Left lung (tissue), 14 donors: ENCODE measurements at regions of chr1 and their contacts with region 1.

Region 1: DNA sequence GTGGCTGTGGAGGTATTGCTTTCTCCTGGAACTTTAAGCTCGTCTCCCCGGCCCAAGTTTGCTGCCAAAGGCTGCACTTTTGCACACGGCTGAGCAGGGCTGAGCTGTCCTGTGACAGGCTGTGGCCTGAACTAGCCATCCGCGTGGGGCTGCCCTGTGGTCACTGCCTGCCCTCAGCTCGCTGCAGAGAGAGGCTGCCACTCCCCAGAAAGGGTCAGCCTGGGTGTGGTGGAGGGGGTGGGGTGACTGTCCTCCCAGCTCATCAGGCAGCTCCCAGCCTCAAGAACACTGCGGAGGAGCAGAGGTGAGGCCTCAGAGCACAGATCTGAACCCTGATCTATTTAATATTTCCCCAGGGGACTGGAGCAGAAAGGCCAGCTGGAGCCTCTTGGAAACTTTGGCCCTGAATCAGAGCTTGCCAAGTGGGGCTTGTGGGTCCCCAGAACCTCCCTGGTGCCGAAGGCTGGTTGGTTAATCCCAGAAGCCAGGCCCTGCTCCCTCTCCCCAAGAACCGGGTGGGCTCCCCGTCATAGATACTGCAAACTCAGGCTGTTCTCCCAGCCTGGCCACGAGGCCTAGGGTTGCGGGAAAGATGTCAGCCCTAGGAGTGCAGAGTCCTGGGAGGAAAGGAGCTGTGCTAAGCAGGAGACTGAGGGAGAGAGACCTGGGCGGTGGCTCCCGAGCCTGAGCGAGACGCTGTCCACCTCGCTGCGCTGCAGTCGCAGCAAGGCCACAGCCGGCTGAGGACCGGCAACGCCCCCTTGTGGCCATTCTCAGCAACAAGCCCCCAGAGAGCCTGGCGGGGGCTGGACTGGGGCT is 125.1 kb upstream of the IPO9 start:
- DNase-seq: peak; percentile 78 to 96 (median 86)
- ATAC-seq: peak; percentile 97
- H3K4me3 ChIP-seq: no peak overlapping the region
- H3K27ac ChIP-seq: no peak overlapping the region
- H3K4me1 ChIP-seq: peaks cover 0 to 4% of the 10 kb centered on the region in 2 donors
- H3K27me3 ChIP-seq: no peaks in the 10 kb centered on the region
- CTCF ChIP-seq: peak; percentile 93 to 95

Region 2: GRCh38 chr1:201559679-201560162 is 144.1 kb before region 1 on chr1:
- intact Hi-C with region 1: loop called in 1 of 2 experiments (anchors 5 kb)
- DNase-seq: peak; percentile 76 to 93 (median 86)
- ATAC-seq: peak; percentile 99
- H3K4me3 ChIP-seq: no peak overlapping the region
- H3K27ac ChIP-seq: no peak overlapping the region
- H3K4me1 ChIP-seq: peaks cover 0 to 57% of the 10 kb centered on the region in 2 donors
- H3K27me3 ChIP-seq: no peaks in the 10 kb centered on the region
- CTCF ChIP-seq: peak; percentile 90 to 96